MCF 10A (cell line): ENCODE measurements at regions of chr18 and their contacts with region 1.

Region 1: GRCh38 chr18:3593904-3594661 is 144.1 kb downstream of the TGIF1 start:
- DNase-seq: peak; percentile 96
- H3K4me3 Mint-ChIP-seq: peak overlapping the region; percentile 82
- H3K27ac Mint-ChIP-seq: peak overlapping the region; percentile 98
- H3K4me1 Mint-ChIP-seq: peaks cover 40% of the 10 kb centered on the region
- H3K27me3 Mint-ChIP-seq: no peaks in the 10 kb centered on the region
- CTCF ChIP-seq: peak; percentile 80

Region 2: DNA sequence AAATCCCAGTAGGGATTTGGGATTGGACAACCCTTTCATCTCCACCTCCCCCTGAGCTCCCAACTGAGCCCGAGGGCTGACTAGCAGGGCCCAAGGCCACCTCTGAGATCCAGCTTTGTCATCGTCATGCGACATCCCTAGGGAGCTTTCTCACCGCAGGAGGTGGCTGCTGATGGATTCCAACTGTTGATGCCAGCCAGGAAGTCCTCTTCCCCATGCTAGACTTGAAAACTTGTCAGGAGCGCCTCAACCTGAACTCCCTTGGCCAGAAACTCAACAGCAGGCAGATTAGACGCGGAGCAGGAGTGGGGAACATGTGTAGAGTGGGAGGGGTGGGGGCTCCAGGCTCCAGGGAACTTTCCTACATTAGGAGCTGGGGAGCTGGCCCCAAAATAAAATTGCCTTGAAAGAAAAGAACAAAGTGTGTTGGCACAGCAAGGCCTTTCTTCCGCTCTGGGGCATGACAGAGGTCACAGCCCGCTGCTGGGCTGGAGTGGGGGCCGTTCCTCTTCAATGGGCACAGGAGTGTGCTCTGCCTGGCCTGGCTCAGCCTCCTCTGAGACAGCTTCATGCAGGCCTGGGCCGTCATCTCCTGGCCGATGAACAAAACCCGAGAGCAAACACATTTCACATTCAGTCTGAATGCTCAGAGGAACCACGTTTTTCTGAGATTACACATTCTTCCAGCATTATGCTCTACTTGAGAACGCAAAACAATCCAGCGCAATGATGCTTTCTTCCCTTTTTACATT is 712.8 kb before region 1 on chr18:
- CTCF ChIA-PET with region 1: no interaction called
- POLR2A ChIA-PET with region 1: no interaction called
- intact Hi-C with region 1: no loop called
- DNase-seq: no peak
- H3K4me3 Mint-ChIP-seq: no peak overlapping the region
- H3K27ac Mint-ChIP-seq: no peak overlapping the region
- H3K4me1 Mint-ChIP-seq: no peaks in the 10 kb centered on the region
- H3K27me3 Mint-ChIP-seq: peaks cover 25% of the 10 kb centered on the region
- CTCF ChIP-seq: no peak

Region 3: GRCh38 chr18:3012964-3013804 is 580.9 kb before region 1 on chr18 and contains the start of gene LPIN2:
- CTCF ChIA-PET with region 1: no interaction called
- POLR2A ChIA-PET with region 1: no interaction called
- intact Hi-C with region 1: no loop called
- DNase-seq: peak; percentile 97
- H3K4me3 Mint-ChIP-seq: peak within 1 kb of the TSS; percentile 82
- H3K27ac Mint-ChIP-seq: peak within 1 kb of the TSS; percentile 92
- H3K4me1 Mint-ChIP-seq: peaks cover 21% of the 10 kb centered on the region
- H3K27me3 Mint-ChIP-seq: no peaks in the 10 kb centered on the region
- CTCF ChIP-seq: no peak
- total RNA-seq, gene LPIN2: 13.1 and 15.9 TPM in 2 replicates

Region 4: GRCh38 chr18:3281456-3282400 is 312.4 kb before region 1 on chr18:
- CTCF ChIA-PET with region 1: interaction called, 12 read pairs
- POLR2A ChIA-PET with region 1: interaction called, 6 read pairs
- intact Hi-C with region 1: loop called (anchors 2 kb)
- DNase-seq: peak; percentile 80
- H3K4me3 Mint-ChIP-seq: no peak overlapping the region
- H3K27ac Mint-ChIP-seq: no peak overlapping the region
- H3K4me1 Mint-ChIP-seq: peaks cover 6% of the 10 kb centered on the region
- H3K27me3 Mint-ChIP-seq: no peaks in the 10 kb centered on the region
- CTCF ChIP-seq: peak; percentile 52

Region 5: DNA sequence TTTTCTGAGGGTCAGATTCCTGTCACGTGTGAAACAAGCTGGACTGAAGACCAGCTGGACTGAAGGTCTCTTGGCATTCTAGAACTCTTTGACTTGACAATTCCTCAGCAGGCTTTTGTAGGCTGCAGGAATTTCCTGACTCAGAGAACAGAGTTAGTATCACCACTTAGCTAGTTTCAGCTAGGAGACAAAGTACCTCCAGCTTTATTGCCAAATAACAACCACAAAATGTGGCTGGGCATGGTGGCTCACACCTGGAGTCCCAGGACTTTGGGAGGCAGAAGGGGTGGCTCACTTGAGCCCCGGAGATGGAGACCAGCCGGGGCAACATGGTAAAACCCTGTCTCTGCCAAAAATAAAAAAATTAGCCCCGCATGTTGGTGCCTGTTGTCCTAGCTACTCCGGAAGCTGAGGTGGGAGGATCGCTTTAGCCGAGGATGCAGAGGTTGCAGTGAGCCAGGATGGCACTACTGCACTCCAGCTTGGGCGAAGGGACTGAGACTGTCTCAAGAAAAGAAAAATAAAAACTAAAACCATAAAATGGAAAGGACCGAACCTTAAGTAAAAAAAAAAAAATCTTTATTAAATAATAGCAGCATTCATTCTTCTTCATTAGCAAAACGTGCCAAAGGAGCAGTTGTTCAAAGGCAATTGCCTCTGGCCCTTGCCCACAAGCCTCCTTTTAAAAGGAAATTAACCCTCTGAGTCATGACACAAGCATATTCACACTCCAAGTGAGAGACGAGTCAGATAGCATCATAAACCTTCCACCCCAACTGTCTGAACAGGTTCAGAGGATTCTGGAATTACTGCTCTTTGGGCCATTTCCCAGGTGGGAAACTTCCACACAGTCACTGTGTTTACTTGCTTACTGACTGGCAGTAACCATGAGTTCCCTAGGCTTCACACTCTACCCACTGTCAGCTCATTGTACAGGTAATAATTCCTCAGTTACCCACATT is 243.2 kb before region 1 on chr18:
- CTCF ChIA-PET with region 1: no interaction called
- POLR2A ChIA-PET with region 1: interaction called, 11 read pairs
- intact Hi-C with region 1: no loop called
- DNase-seq: peak; percentile 73
- H3K4me3 Mint-ChIP-seq: no peak overlapping the region
- H3K27ac Mint-ChIP-seq: no peak overlapping the region
- H3K4me1 Mint-ChIP-seq: peaks cover 14% of the 10 kb centered on the region
- H3K27me3 Mint-ChIP-seq: no peaks in the 10 kb centered on the region
- CTCF ChIP-seq: no peak

Region 6: GRCh38 chr18:3454365-3455089 is 139.6 kb before region 1 on chr18:
- CTCF ChIA-PET with region 1: interaction called, 76 read pairs
- POLR2A ChIA-PET with region 1: interaction called, 325 read pairs
- intact Hi-C with region 1: loop called (anchors 1 kb)
- DNase-seq: peak; percentile 62
- H3K4me3 Mint-ChIP-seq: peak overlapping the region; percentile 95
- H3K27ac Mint-ChIP-seq: peak overlapping the region; percentile 99
- H3K4me1 Mint-ChIP-seq: peaks cover 37% of the 10 kb centered on the region
- H3K27me3 Mint-ChIP-seq: no peaks in the 10 kb centered on the region
- CTCF ChIP-seq: peak; percentile 48

Region 7: DNA sequence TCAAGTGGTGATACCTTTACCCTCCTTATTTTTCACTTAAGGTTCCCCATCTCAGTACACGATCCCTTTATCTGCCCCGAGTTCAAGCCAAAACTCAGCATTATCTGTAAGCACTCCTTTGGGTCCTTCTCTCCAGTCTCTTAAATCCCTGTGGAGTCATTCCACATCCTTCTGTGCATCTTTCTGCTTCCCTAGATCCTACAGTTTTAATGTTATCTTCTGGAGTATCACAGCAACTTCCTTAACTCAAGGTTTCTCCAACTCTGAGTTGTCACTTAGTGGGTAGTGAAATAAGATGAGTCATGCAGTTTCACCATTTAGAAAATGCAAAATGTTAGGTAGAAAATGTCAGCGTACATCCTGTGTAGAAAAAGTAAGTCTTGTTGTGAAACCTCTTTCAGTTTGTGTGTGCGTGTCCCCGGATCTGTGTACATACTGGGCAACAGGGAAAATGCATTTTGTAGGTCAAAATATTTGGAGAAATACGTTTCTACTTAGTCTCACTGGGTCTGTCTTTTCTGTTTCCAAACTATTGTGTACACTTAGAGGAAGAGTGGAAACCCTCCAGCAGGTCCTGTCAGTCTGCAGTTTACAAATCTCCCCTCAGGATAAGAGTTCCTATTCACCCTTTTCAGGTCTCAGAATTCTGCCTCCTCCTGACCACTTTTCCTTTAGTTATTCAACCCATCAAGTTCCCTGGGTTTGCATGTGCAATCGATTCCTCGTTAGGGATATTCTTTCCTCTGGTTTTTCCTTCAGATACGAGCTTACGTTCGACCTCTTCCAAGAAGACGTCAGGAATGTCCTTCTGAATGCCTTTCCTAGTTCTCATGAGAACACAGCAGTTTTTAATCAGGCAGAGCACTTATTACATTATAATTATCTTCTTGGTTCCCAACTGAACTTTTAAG is 10.7 kb after region 1 on chr18:
- CTCF ChIA-PET with region 1: interaction called, 16 read pairs
- POLR2A ChIA-PET with region 1: interaction called, 244 read pairs
- intact Hi-C with region 1: loop called (anchors 1 kb)
- DNase-seq: peak; percentile 91
- H3K4me3 Mint-ChIP-seq: no peak overlapping the region
- H3K27ac Mint-ChIP-seq: no peak overlapping the region
- H3K4me1 Mint-ChIP-seq: no peaks in the 10 kb centered on the region
- H3K27me3 Mint-ChIP-seq: no peaks in the 10 kb centered on the region
- CTCF ChIP-seq: no peak

Region 8: DNA sequence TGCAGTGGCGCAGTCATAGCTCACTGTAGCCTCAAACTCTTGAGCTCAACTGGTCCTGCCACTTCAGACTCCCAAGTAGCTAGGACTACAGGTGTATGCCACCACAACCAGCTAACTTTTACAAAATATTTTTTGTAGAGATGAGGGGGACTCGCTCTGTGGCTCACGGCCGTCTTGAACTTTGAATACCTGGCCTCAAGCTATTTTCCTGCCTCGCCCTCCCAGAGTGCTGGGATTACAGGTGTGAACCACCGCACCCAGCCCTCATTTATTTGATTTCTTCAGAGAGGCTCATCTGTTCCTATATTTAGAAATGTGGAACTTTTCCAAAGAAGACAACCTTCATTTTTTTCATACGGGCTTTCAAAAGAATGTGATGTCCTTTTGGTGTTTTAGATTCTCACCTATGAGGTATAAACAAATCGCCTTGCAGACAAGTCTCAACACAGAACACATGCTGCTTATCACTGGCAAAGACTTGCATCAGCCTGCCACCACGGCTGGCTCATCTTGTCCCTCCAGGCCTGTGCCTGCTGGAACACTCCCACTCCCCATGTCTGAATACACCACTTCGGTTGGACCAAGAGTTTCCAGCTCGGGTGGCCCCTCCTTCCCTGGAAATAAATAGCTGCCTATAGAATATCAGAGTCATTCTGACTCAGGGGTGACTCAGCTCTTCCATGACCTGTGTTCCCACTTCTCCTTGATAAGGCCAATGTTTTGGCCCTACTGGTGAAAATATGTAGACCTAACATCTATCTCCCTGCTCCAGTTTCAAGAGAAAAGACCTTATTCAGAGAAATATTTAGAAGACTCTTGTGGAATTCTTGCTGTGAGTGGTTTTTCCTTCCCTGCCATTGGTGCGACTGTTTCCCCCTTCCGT is 58.5 kb after region 1 on chr18:
- CTCF ChIA-PET with region 1: interaction called, 6 read pairs
- POLR2A ChIA-PET with region 1: interaction called, 108 read pairs
- intact Hi-C with region 1: loop called (anchors 2 kb)
- DNase-seq: peak; percentile 99
- H3K4me3 Mint-ChIP-seq: peak overlapping the region; percentile 4
- H3K27ac Mint-ChIP-seq: peak overlapping the region; percentile 91
- H3K4me1 Mint-ChIP-seq: peaks cover 41% of the 10 kb centered on the region
- H3K27me3 Mint-ChIP-seq: no peaks in the 10 kb centered on the region
- CTCF ChIP-seq: peak; percentile 13